Endothelial cell of umbilical vein (primary cell): ENCODE measurements at regions of chr2 and their contacts with region 1.

Region 1: GRCh38 chr2:59150217-59150849 is 909.2 kb upstream of the FANCL start:
- DNase-seq: no peak
- H3K4me3 ChIP-seq: no peak overlapping the region
- H3K27ac ChIP-seq: no peak overlapping the region
- H3K4me1 ChIP-seq: no peaks in the 10 kb centered on the region
- H3K27me3 ChIP-seq: no peaks in the 10 kb centered on the region
- CTCF ChIP-seq: no peak
- POLR2A ChIP-seq: no peak

Region 2: GRCh38 chr2:59176737-59177136 is 26.4 kb after region 1 on chr2:
- CTCF ChIA-PET with region 1: no interaction called
- POLR2A ChIA-PET with region 1: no interaction called
- dilution Hi-C with region 1: no loop called
- intact Hi-C with region 1: no loop called
- DNase-seq: no peak
- H3K4me3 ChIP-seq: no peak overlapping the region
- H3K27ac ChIP-seq: no peak overlapping the region
- H3K4me1 ChIP-seq: no peaks in the 10 kb centered on the region
- H3K27me3 ChIP-seq: no peaks in the 10 kb centered on the region
- CTCF ChIP-seq: no peak
- POLR2A ChIP-seq: no peak

Region 3: GRCh38 chr2:60376252-60376651 is 1225.9 kb after region 1 on chr2:
- CTCF ChIA-PET with region 1: no interaction called
- POLR2A ChIA-PET with region 1: no interaction called
- dilution Hi-C with region 1: no loop called
- intact Hi-C with region 1: loop called (anchors 5 kb)
- DNase-seq: no peak
- H3K4me3 ChIP-seq: no peak overlapping the region
- H3K27ac ChIP-seq: no peak overlapping the region
- H3K4me1 ChIP-seq: no peaks in the 10 kb centered on the region
- H3K27me3 ChIP-seq: no peaks in the 10 kb centered on the region
- CTCF ChIP-seq: no peak
- POLR2A ChIP-seq: no peak